ENCODE measurements at regions of chr5 and their contacts with region 1.

Region 1: GRCh38 chr5:141691867-141692532 is 10.0 kb upstream of the ARAP3 start:
- DNase-seq: peak; percentile 85
- ATAC-seq: peak; percentile 86
- H3K4me3 ChIP-seq: peak overlapping the region; percentile 57
- H3K27ac ChIP-seq: no peak overlapping the region
- H3K4me1 ChIP-seq: peaks cover 16% of the 10 kb centered on the region
- H3K27me3 ChIP-seq: no peaks in the 10 kb centered on the region
- CTCF ChIP-seq: peak; percentile 80

Region 2: GRCh38 chr5:141968914-141969608 is 277.1 kb after region 1 on chr5 and contains the start of gene RNF14:
- CTCF ChIA-PET with region 1: interaction called, 3 read pairs
- POLR2A ChIA-PET with region 1: no interaction called
- intact Hi-C with region 1: loop called (anchors 2 kb)
- DNase-seq: peak; percentile 88
- ATAC-seq: peak; percentile 96
- H3K4me3 ChIP-seq: peak within 1 kb of the TSS; percentile 78
- H3K27ac ChIP-seq: peak within 1 kb of the TSS; percentile 58
- H3K4me1 ChIP-seq: peaks cover 25% of the 10 kb centered on the region
- H3K27me3 ChIP-seq: no peaks in the 10 kb centered on the region
- CTCF ChIP-seq: peak; percentile 77
- total RNA-seq, gene RNF14: 32.1 and 49.8 TPM in 2 replicates